A549 (cell line): ENCODE measurements at regions of chr19 and their contacts with region 1.

Region 1: DNA sequence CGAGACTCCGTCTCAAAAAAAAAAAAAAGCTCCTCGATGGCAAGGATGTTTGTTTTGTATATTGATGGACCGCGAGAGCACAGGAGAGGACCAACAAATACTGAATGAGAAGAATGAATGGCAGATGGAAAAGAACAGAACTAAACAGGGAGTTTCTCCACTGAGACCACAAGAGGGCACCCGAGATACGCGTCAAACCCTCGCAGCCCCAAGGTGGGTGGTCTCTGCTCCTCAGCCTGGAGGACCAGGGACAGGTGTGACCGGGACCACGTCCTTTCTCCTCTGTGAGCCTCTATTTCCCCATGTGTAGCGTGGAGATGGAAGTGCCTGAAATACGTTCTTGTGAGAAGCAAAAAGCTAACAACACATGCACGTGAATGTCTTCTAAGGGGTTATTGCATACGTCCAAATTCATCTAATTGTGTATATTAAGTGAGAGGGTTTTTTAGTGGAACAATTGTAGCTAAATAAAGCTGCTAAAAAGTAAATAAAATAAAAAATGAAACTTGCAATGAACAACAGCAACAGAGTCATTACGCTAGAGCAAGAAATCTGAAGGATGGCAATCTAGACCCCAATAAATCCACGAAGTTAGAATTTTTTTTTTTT is 8.3 kb upstream of the CDC42EP5 start:
- DNase-seq: peak in 1 of 2 experiments; percentile 67
- ATAC-seq: peak; percentile 55 to 75; a peak in 5 of 6 replicates
- H3K4me3 ChIP-seq: no peak overlapping the region
- H3K27ac ChIP-seq: no peak overlapping the region
- H3K4me1 ChIP-seq: no peaks in the 10 kb centered on the region
- CTCF ChIP-seq: peak; percentile 79
- EP300 ChIP-seq: no peak
- POLR2A ChIP-seq: no peak
- RAD21 ChIP-seq: peak; percentile 79 to 85

Region 2: DNA sequence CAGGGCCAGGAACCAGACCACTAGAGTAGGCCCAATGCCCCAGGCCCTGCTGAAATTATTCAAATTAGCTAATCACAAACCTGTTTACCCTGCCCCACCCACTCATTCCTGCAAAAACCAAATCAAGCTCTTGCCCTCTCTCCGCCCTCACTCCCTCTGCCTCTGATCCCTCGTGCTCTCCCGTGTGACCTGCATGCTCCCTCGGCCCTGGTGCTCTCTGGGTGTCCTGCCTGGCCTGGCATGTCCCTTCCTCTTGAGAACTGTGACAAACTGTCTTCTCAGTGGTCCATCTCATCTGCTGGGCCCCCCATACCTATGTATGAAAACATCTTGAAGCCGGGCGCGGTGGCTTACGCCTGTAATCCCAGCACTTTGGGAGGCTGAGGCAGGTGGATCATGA is 78.4 kb before region 1 on chr19:
- CTCF ChIA-PET with region 1: no interaction called
- POLR2A ChIA-PET with region 1: no interaction called
- DNase-seq: no peak
- ATAC-seq: no peak
- H3K4me3 ChIP-seq: no peak overlapping the region
- H3K27ac ChIP-seq: no peak overlapping the region
- H3K4me1 ChIP-seq: no peaks in the 10 kb centered on the region
- CTCF ChIP-seq: no peak
- EP300 ChIP-seq: no peak
- POLR2A ChIP-seq: no peak
- RAD21 ChIP-seq: no peak

Region 3: DNA sequence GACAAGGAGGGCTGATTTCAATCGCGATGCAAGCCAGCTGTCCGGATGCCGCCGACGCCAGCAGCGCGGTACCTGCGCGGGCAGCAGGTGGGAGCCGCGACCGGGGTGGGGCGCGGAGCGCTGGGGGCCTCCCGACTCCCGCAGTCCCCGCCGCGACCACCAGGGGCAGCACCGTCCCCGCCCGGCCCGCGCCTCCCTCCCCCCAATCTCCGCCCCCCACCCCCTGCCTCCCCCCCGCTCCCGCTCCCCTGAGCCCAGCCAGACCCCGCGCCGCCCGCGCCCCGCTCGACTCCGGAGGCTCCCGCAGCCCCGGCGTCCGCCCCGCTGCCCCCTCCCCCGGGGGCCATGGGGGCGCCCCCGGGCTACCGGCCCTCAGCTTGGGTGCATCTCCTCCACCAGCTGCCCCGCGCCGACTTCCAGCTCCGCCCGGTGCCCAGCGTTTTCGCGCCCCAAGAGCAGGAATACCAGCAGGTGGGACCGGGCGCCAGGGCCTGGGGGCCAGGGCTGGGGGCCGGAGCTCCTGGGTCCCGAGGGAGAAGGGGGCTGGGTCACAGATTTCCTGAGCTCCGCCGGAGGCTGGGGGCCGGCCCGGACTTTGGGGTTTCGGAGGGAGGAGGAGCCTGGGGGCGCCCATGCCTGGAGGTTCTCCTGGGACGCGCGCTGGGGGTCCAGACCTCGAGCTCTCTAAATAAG is 66.1 kb before region 1 on chr19 and contains the start of gene TTYH1:
- CTCF ChIA-PET with region 1: interaction called, 4 read pairs
- POLR2A ChIA-PET with region 1: interaction called, 15 read pairs
- DNase-seq: no peak
- ATAC-seq: peak in 1 of 2 experiments; percentile 48; a peak in 3 of 6 replicates
- H3K4me3 ChIP-seq: no peak within 1 kb of the TSS
- H3K27ac ChIP-seq: no peak within 1 kb of the TSS
- H3K4me1 ChIP-seq: peaks cover 10% of the 10 kb centered on the region; the same call in 2 of the 3 replicates
- CTCF ChIP-seq: peak; percentile 24; the same call in 2 of the 3 replicates
- EP300 ChIP-seq: no peak
- POLR2A ChIP-seq: no peak
- RAD21 ChIP-seq: no peak
- polyA plus RNA-seq, gene TTYH1: 0.31 and 0.56 TPM in 2 replicates

Region 4: GRCh38 chr19:54470991-54471782 is 10.2 kb before region 1 on chr19:
- CTCF ChIA-PET with region 1: interaction called, 31 read pairs
- POLR2A ChIA-PET with region 1: no interaction called
- DNase-seq: no peak
- ATAC-seq: peak in 1 of 2 experiments; percentile 15; a peak in 2 of 6 replicates
- H3K4me3 ChIP-seq: no peak overlapping the region
- H3K27ac ChIP-seq: 0 out of 6 replicates have a peak overlapping the region, but pooled peaks of 1 of the 2 experiments have one; percentile 29
- H3K4me1 ChIP-seq: peaks cover 12% of the 10 kb centered on the region; the same call in 1 of the 3 replicates
- CTCF ChIP-seq: no peak
- EP300 ChIP-seq: no peak
- POLR2A ChIP-seq: no peak
- RAD21 ChIP-seq: no peak

Region 5: GRCh38 chr19:54492568-54492967 is 11.1 kb after region 1 on chr19:
- CTCF ChIA-PET with region 1: interaction called, 29 read pairs
- POLR2A ChIA-PET with region 1: no interaction called
- DNase-seq: no peak
- ATAC-seq: no peak
- H3K4me3 ChIP-seq: no peak overlapping the region
- H3K27ac ChIP-seq: no peak overlapping the region
- H3K4me1 ChIP-seq: no peaks in the 10 kb centered on the region
- CTCF ChIP-seq: no peak
- EP300 ChIP-seq: no peak
- POLR2A ChIP-seq: no peak
- RAD21 ChIP-seq: no peak

Region 6: GRCh38 chr19:54541712-54542111 is 60.3 kb after region 1 on chr19:
- CTCF ChIA-PET with region 1: no interaction called
- POLR2A ChIA-PET with region 1: no interaction called
- DNase-seq: no peak
- ATAC-seq: no peak
- H3K4me3 ChIP-seq: no peak overlapping the region
- H3K27ac ChIP-seq: no peak overlapping the region
- H3K4me1 ChIP-seq: no peaks in the 10 kb centered on the region
- CTCF ChIP-seq: no peak
- EP300 ChIP-seq: no peak
- POLR2A ChIP-seq: no peak
- RAD21 ChIP-seq: no peak

Region 7: GRCh38 chr19:54674021-54674617 is 192.7 kb after region 1 on chr19:
- CTCF ChIA-PET with region 1: interaction called, 51 read pairs
- POLR2A ChIA-PET with region 1: no interaction called
- DNase-seq: peak; percentile 49 to 66
- ATAC-seq: peak; percentile 20 to 79; a peak in 3 of 6 replicates
- H3K4me3 ChIP-seq: no peak overlapping the region
- H3K27ac ChIP-seq: no peak overlapping the region
- H3K4me1 ChIP-seq: no peaks in the 10 kb centered on the region
- CTCF ChIP-seq: peak; percentile 84
- EP300 ChIP-seq: no peak
- POLR2A ChIP-seq: no peak
- RAD21 ChIP-seq: peak; percentile 49 to 70; a peak in 4 of 5 replicates